Posterior cingulate gyrus (tissue), 11 donors: ENCODE measurements at regions of chr1 and their contacts with region 1.

Region 1: GRCh38 chr1:54488779-54489626 is 59.0 kb upstream of the ACOT11 start:
- DNase-seq: peak; percentile 64 to 96 (median 78)

Region 2: GRCh38 chr1:54070171-54070837 is 418.7 kb before region 1 on chr1:
- intact Hi-C with region 1: loop called (anchors 1 kb)
- DNase-seq: no peak

Region 3: DNA sequence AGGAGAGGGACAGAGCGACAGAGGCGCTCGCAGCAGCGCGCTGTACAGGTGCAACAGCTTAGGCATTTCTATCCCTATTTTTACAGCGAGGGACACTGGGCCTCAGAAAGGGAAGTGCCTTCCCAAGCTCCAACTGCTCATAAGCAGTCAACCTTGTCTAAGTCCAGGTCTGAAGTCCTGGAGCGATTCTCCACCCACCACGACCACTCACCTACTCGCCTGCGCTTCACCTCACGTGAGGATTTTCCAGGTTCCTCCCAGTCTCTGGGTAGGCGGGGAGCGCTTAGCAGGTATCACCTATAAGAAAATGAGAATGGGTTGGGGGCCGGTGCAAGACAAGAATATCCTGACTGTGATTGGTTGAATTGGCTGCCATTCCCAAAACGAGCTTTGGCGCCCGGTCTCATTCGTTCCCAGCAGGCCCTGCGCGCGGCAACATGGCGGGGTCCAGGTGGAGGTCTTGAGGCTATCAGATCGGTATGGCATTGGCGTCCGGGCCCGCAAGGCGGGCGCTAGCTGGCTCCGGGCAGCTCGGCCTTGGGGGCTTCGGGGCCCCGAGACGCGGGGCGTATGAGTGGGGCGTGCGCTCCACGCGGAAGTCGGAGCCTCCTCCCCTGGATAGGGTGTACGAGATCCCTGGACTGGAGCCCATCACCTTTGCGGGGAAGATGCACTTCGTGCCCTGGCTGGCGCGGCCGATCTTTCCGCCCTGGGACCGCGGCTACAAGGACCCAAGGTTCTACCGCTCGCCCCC is 289.1 kb before region 1 on chr1 and contains the starts of genes CYB5RL and MRPL37:
- intact Hi-C with region 1: loop called (anchors 10 kb)
- DNase-seq: peak; percentile 87 to 98 (median 92)

Region 4: GRCh38 chr1:54310439-54311328 is 178.3 kb before region 1 on chr1:
- intact Hi-C with region 1: loop called (anchors 5 kb)
- DNase-seq: peak in 2 of 10 donors; percentile 65 to 67